Naive thymus-derived CD4-positive, alpha-beta T cell (primary cell): ENCODE measurements at regions of chr3 and their contacts with region 1.

Region 1: GRCh38 chr3:52536369-52537164 is at the start of gene UQCC5:
- DNase-seq: peak; percentile 89 to 98 (median 97)
- ATAC-seq: peak; percentile 95
- H3K4me3 ChIP-seq: peak within 1 kb of the TSS; percentile 67
- H3K4me3 Mint-ChIP-seq: peak within 1 kb of the TSS; percentile 96 to 100 (median 99)
- H3K27ac ChIP-seq: peak within 1 kb of the TSS; percentile 85
- H3K27ac Mint-ChIP-seq: peak within 1 kb of the TSS; percentile 96 to 99 (median 98)
- H3K4me1 ChIP-seq: peaks cover 24 to 30% of the 10 kb centered on the region in 2 donors
- H3K4me1 Mint-ChIP-seq: peaks cover 29 to 66% (median 50%) of the 10 kb centered on the region in 7 donors
- H3K27me3 ChIP-seq: no peaks in the 10 kb centered on the region
- H3K27me3 Mint-ChIP-seq: no peaks in the 10 kb centered on the region
- total RNA-seq, gene UQCC5: 5.4 to 11.9 (median 10.7) TPM

Region 2: GRCh38 chr3:51734572-51734907 is 802.0 kb before region 1 on chr3:
- CTCF ChIA-PET with region 1: no interaction called
- POLR2A ChIA-PET with region 1: no interaction called
- intact Hi-C with region 1: no loop called
- DNase-seq: no peak
- ATAC-seq: no peak
- H3K4me3 ChIP-seq: no peak overlapping the region
- H3K4me3 Mint-ChIP-seq: peak overlapping the region in 2 of 10 donors; percentile 44 to 62
- H3K27ac ChIP-seq: no peak overlapping the region
- H3K27ac Mint-ChIP-seq: peak overlapping the region in 1 of 9 donors; percentile 80
- H3K4me1 ChIP-seq: peaks cover 0 to 7% of the 10 kb centered on the region in 2 donors
- H3K4me1 Mint-ChIP-seq: peaks cover 0 to 28% (median 13%) of the 10 kb centered on the region in 7 donors
- H3K27me3 ChIP-seq: no peaks in the 10 kb centered on the region
- H3K27me3 Mint-ChIP-seq: peaks cover 0 to 21% (median 8%) of the 10 kb centered on the region in 5 donors

Region 3: GRCh38 chr3:51941798-51942602 is 594.6 kb before region 1 on chr3 and contains the starts of genes PARP3 and RRP9:
- CTCF ChIA-PET with region 1: no interaction called
- POLR2A ChIA-PET with region 1: no interaction called
- intact Hi-C with region 1: no loop called
- DNase-seq: peak; percentile 97 to 100 (median 99)
- ATAC-seq: peak; percentile 98
- H3K4me3 ChIP-seq: peak within 1 kb of the TSS; percentile 78
- H3K4me3 Mint-ChIP-seq: peak within 1 kb of the TSS; percentile 72 to 94 (median 90)
- H3K27ac ChIP-seq: peak within 1 kb of the TSS; percentile 80
- H3K27ac Mint-ChIP-seq: peak within 1 kb of the TSS; percentile 78 to 92 (median 89)
- H3K4me1 ChIP-seq: peaks cover 19 to 23% of the 10 kb centered on the region in 2 donors
- H3K4me1 Mint-ChIP-seq: peaks cover 22 to 40% (median 31%) of the 10 kb centered on the region in 7 donors
- H3K27me3 ChIP-seq: no peaks in the 10 kb centered on the region
- H3K27me3 Mint-ChIP-seq: no peaks in the 10 kb centered on the region
- total RNA-seq, gene PARP3: 7.7 to 21.5 (median 11.2) TPM
- total RNA-seq, gene RRP9: 10.2 to 34.2 (median 16.6) TPM

Region 4: GRCh38 chr3:52455283-52456168 is 81.0 kb before region 1 on chr3 and contains the start of gene NISCH:
- CTCF ChIA-PET with region 1: no interaction called
- POLR2A ChIA-PET with region 1: interaction called, 4 read pairs
- intact Hi-C with region 1: loop called (anchors 1 kb)
- DNase-seq: peak; percentile 92 to 99 (median 97)
- ATAC-seq: peak; percentile 98
- H3K4me3 ChIP-seq: peak within 1 kb of the TSS; percentile 98
- H3K4me3 Mint-ChIP-seq: peak within 1 kb of the TSS; percentile 87 to 96 (median 93)
- H3K27ac ChIP-seq: peak within 1 kb of the TSS; percentile 88
- H3K27ac Mint-ChIP-seq: peak within 1 kb of the TSS; percentile 96 to 100 (median 99)
- H3K4me1 ChIP-seq: peaks cover 15 to 23% of the 10 kb centered on the region in 2 donors
- H3K4me1 Mint-ChIP-seq: peaks cover 25 to 47% (median 41%) of the 10 kb centered on the region in 7 donors
- H3K27me3 ChIP-seq: no peaks in the 10 kb centered on the region
- H3K27me3 Mint-ChIP-seq: no peaks in the 10 kb centered on the region
- total RNA-seq, gene NISCH: 86.8 to 210 (median 162) TPM

Region 5: GRCh38 chr3:52614689-52615088 is 78.1 kb after region 1 on chr3:
- CTCF ChIA-PET with region 1: no interaction called
- POLR2A ChIA-PET with region 1: no interaction called
- intact Hi-C with region 1: loop called in 1 of 2 experiments (anchors 1 kb)
- DNase-seq: no peak
- ATAC-seq: no peak
- H3K4me3 ChIP-seq: no peak overlapping the region
- H3K4me3 Mint-ChIP-seq: no peak overlapping the region
- H3K27ac ChIP-seq: no peak overlapping the region
- H3K27ac Mint-ChIP-seq: no peak overlapping the region
- H3K4me1 ChIP-seq: no peaks in the 10 kb centered on the region
- H3K4me1 Mint-ChIP-seq: peaks cover 0 to 7% (median under 1%) of the 10 kb centered on the region in 7 donors
- H3K27me3 ChIP-seq: no peaks in the 10 kb centered on the region
- H3K27me3 Mint-ChIP-seq: no peaks in the 10 kb centered on the region